AG04449 (cell line): ENCODE measurements at regions of chr3 and their contacts with region 1.

Region 1: GRCh38 chr3:43855674-43856299 is 165.0 kb downstream of the ABHD5 start:
- DNase-seq: no peak
- H3K4me3 ChIP-seq: no peak overlapping the region
- CTCF ChIP-seq: peak; percentile 73

Region 2: DNA sequence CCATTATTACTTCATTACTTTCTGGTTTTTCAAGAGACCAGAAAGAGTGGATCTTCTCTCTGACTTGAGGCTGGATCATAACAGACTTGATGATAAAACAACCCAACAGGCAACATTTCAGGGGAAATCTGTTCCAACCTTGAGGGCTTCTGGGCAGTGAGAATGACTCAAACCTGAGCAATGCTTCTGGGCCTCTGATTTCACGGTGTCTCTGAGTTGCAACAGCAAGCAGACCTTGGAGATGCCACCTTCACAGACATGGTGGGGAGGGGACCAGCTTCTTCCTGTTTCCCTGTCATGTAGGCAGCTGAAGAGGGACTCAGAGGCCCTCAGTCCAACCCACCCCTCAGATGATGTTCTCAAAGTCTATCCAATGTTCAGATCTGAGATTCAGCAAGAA is 61.0 kb before region 1 on chr3:
- CTCF ChIA-PET with region 1: interaction called, 18 read pairs
- POLR2A ChIA-PET with region 1: no interaction called
- DNase-seq: peak; percentile 49
- H3K4me3 ChIP-seq: no peak overlapping the region
- CTCF ChIP-seq: no peak

Region 3: DNA sequence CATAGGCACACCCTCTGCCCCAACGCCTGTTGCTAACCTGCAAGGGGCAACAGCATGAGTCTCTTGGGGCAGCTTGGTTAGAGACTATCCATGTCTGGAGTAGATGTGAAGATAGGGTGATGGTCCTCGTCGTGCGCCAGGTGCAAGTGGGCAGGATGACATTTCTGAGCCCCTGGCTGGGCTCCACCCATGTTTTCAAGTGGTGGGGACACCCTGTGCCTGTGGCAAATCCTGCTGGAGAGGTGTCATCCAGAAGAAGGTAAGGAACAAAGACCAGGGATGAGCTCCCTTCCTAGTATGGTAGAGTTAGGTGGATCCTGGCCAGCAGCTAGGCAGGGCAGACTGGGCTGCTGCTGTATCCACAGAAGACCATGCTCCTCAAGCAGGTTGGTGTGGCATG is 12.4 kb before region 1 on chr3:
- CTCF ChIA-PET with region 1: interaction called, 20 read pairs
- POLR2A ChIA-PET with region 1: no interaction called
- DNase-seq: no peak
- H3K4me3 ChIP-seq: no peak overlapping the region
- CTCF ChIP-seq: no peak

Region 4: DNA sequence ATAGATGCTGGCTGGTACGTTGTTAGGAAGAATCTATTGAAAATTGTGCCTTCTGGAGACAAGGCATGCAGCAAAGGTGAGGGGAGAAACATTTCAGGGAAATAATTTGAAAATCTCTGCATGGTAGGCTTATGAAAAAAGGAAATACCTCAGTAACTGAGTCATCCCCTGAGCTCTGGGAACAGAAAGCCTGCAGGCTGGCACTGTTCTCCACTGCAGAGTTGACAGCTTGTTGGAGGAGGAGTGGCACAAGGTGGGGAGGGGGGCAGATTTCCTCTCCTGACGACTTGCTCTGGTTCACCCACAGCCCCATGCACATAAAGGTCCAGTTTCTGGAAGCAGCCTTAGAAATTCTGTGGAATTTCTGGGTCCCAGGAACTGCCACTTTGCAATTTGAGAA is 14.3 kb after region 1 on chr3:
- CTCF ChIA-PET with region 1: interaction called, 155 read pairs
- POLR2A ChIA-PET with region 1: interaction called, 14 read pairs
- DNase-seq: no peak
- H3K4me3 ChIP-seq: no peak overlapping the region
- CTCF ChIP-seq: no peak

Region 5: GRCh38 chr3:43996379-43997301 is 140.9 kb after region 1 on chr3:
- CTCF ChIA-PET with region 1: interaction called, 10 read pairs
- POLR2A ChIA-PET with region 1: no interaction called
- DNase-seq: no peak
- H3K4me3 ChIP-seq: peak overlapping the region; percentile 89
- CTCF ChIP-seq: peak; percentile 61

Region 6: DNA sequence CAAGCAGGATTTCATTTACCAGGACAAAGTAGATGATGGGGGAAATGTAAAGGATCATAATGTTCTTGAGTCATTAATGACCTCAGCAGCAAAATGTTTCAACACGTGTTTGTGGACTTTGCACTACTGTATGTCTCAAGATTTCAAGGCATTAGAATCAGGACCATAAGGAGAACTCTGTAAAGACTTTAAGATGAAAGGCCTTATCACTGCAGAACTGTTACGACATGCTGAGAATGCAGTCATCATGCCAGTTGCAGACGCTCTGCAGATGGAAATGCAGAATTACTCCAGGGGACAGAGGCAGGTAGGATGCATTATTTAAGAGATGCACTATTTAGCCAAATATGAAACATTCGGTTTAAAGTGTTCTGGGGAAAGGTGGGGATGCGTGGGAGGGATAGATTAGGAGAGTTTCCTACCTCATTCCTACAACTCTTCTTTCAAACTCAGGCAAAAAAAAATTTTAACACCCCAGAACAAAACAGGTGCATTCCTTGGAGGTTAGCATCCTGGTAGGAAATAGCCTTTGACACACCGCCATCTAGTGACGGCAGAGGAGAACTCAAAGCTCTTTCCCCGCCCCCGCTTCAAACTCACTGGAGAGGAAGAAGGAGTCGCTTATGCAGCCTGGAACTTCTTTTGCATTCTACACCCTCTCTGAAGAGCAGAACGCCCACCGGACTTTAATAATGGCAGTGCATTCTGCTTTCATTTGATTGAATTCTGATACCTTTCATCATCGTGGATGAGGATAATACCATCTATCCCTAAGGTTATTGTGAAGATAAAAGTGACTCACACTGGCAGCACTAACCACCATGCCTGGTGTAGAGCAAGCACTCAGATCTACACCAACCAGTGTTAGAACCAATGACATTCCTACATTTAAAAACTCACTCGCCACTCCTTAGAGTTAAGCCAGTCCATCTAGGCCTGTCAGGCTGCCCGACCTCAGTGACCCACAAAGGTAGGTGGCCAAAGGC is 342.8 kb after region 1 on chr3:
- CTCF ChIA-PET with region 1: interaction called, 14 read pairs
- POLR2A ChIA-PET with region 1: no interaction called
- DNase-seq: peak; percentile 12
- H3K4me3 ChIP-seq: no peak overlapping the region
- CTCF ChIP-seq: peak; percentile 83